ENCODE measurements at regions of chr3 and their contacts with region 1.

Region 1: DNA sequence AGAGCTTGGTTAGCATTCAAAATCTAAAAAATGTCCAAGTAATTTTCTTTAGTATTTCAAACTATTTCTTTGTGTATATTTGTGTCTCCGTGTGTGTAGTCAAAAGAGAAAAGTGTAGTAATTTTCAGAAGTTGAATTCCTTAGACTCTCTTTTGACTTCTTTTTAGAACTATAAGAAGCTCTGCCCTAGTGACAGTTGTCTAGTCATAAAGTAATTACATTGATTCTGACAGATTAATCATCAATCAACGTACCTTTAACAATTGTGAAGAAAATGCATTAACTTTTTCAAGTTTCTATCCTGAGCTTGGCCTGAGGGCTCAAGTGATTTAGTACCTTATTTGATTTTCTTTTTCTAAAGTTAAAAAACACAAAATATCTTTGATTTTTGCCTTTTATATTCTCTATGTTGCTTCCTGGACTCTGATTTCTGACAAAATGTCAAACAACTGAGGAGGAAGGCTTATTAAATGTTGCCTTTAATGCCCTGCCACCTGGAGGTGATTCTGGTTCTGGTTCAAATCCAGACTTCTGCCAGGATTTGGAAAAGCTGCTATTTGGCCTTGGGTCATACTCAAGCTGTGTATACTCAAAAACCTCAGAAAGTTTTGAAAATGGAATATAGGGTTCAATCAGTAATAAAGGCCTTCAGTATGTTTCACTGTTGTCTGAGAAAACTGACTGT is 653.6 kb downstream of the NSUN3 start:
- DNase-seq: no peak
- ATAC-seq: no peak
- H3K4me3 Mint-ChIP-seq: no peak overlapping the region
- H3K27ac Mint-ChIP-seq: no peak overlapping the region
- H3K4me1 Mint-ChIP-seq: no peaks in the 10 kb centered on the region
- H3K27me3 Mint-ChIP-seq: no peaks in the 10 kb centered on the region

Region 2: GRCh38 chr3:94665922-94666321 is 50.5 kb before region 1 on chr3:
- CTCF ChIA-PET with region 1: no interaction called
- POLR2A ChIA-PET with region 1: no interaction called
- intact Hi-C with region 1: loop called in 1 of 2 experiments (anchors 10 kb)
- DNase-seq: no peak
- ATAC-seq: no peak
- H3K4me3 Mint-ChIP-seq: no peak overlapping the region
- H3K27ac Mint-ChIP-seq: no peak overlapping the region
- H3K4me1 Mint-ChIP-seq: no peaks in the 10 kb centered on the region
- H3K27me3 Mint-ChIP-seq: no peaks in the 10 kb centered on the region

Measured in activated CD4-positive, alpha-beta T cell treated with anti-CD3 and anti-CD28 coated beads for 36 hours (primary cell).